ENCODE measurements at regions of chr12 and their contacts with region 1.

Region 1: GRCh38 chr12:56581418-56582145 is 48.5 kb downstream of the BAZ2A start:
- DNase-seq: peak; percentile 78
- ATAC-seq: peak; percentile 81
- H3K4me3 ChIP-seq: no peak overlapping the region
- H3K27ac ChIP-seq: peak overlapping the region; percentile 50
- H3K4me1 ChIP-seq: peaks cover 22% of the 10 kb centered on the region
- H3K27me3 ChIP-seq: no peaks in the 10 kb centered on the region
- CTCF ChIP-seq: no peak

Region 2: GRCh38 chr12:56377310-56377988 is 204.1 kb before region 1 on chr12:
- CTCF ChIA-PET with region 1: no interaction called
- POLR2A ChIA-PET with region 1: no interaction called
- intact Hi-C with region 1: no loop called
- DNase-seq: peak; percentile 80
- ATAC-seq: peak; percentile 98
- H3K4me3 ChIP-seq: no peak overlapping the region
- H3K27ac ChIP-seq: no peak overlapping the region
- H3K4me1 ChIP-seq: peaks cover 10% of the 10 kb centered on the region
- H3K27me3 ChIP-seq: no peaks in the 10 kb centered on the region
- CTCF ChIP-seq: peak; percentile 66

Region 3: DNA sequence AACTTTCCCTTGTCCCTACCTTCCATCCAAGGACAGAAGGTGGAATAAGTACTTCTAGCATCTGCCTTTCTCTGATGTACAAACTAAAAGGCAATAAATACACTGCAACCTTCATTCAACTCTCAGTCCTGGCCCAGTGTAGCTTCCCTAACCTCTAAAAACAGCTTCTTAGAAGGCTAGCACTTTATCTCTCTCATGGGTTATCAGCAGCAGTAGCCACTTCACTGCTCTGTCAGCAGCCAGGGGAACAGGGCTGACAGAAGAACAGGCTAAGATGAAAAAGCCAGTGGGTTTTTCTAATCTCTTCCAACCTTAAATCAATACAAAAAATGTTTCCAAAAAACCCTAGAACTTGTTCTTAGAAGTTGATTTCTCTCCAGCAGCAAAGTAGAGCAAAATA is 35.3 kb after region 1 on chr12:
- CTCF ChIA-PET with region 1: no interaction called
- POLR2A ChIA-PET with region 1: interaction called, 11 read pairs
- intact Hi-C with region 1: no loop called
- DNase-seq: no peak
- ATAC-seq: no peak
- H3K4me3 ChIP-seq: no peak overlapping the region
- H3K27ac ChIP-seq: no peak overlapping the region
- H3K4me1 ChIP-seq: no peaks in the 10 kb centered on the region
- H3K27me3 ChIP-seq: no peaks in the 10 kb centered on the region
- CTCF ChIP-seq: no peak

Measured in PC-3 (cell line).